CD8-positive, alpha-beta T cell (primary cell): ENCODE measurements at regions of chr1 and their contacts with region 1.

Region 1: DNA sequence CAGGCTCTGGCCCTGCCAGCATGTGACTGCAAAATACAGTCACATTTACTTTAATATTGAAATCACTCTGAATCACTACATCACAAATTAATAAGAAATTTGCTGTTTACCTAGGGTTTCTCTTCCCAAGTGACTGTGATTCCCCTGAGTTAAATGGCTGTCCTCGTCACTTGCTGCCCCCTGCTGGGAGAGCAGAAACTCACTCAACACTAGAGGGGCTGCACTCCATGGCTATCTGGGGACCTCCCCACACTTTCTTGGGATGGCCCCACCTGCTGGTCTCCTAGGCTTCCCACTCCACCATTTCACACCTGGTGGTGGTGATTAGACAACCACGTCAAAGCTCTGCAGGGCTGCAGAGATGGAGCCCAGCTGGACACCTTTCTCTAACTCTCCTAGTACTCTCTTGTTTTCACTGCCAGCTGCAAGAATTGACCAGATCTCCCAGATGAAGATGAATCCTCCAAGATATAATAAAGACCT is 63.4 kb downstream of the CD2 start:
- DNase-seq: peak; percentile 43 to 89 (median 76)
- ATAC-seq: peak; percentile 71
- H3K4me3 ChIP-seq: no peak overlapping the region
- H3K4me3 Mint-ChIP-seq: peak overlapping the region; percentile 60
- H3K27ac ChIP-seq: no peak overlapping the region
- H3K27ac Mint-ChIP-seq: peak overlapping the region; percentile 70
- H3K4me1 ChIP-seq: peaks cover 19% of the 10 kb centered on the region
- H3K4me1 Mint-ChIP-seq: peaks cover 31% of the 10 kb centered on the region
- H3K27me3 ChIP-seq: no peaks in the 10 kb centered on the region
- H3K27me3 Mint-ChIP-seq: no peaks in the 10 kb centered on the region
- CTCF ChIP-seq: peak; percentile 80

Region 2: DNA sequence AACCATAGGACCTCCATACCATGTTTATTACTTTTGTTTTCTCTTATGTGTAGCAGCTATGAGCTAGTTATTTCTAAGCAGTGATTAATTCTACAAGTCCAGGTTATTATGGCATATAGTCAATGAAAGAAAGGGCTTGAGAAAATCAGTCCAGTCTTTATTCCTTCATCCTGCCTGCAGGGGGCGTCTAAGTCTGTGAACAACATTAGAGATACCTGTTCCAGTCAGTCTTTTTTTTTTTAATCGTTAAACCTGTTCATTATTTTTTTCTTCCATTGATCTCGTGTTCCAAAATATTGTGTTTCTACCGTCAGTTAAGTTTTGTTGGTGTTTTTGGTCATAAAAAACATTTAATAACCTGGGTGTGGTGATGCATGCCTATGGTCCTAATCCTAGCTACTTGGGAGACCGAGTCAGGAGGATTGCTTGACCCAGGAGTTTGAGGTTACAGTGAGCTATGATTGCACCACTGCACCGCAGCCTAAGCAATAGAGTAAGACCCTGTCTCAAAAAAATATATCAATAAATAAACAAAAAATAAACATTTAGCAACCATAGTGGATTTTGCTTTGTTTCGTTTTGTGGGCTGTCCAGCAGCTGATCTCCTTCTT is 92.8 kb before region 1 on chr1:
- CTCF ChIA-PET with region 1: interaction called, 43 read pairs
- POLR2A ChIA-PET with region 1: no interaction called
- intact Hi-C with region 1: loop called in 1 of 2 experiments (anchors 1 kb)
- DNase-seq: peak; percentile 52 to 86 (median 81)
- ATAC-seq: peak; percentile 75
- H3K4me3 ChIP-seq: no peak overlapping the region
- H3K4me3 Mint-ChIP-seq: no peak overlapping the region
- H3K27ac ChIP-seq: no peak overlapping the region
- H3K27ac Mint-ChIP-seq: no peak overlapping the region
- H3K4me1 ChIP-seq: no peaks in the 10 kb centered on the region
- H3K4me1 Mint-ChIP-seq: peaks cover 15% of the 10 kb centered on the region
- H3K27me3 ChIP-seq: no peaks in the 10 kb centered on the region
- H3K27me3 Mint-ChIP-seq: no peaks in the 10 kb centered on the region
- CTCF ChIP-seq: peak; percentile 97

Region 3: DNA sequence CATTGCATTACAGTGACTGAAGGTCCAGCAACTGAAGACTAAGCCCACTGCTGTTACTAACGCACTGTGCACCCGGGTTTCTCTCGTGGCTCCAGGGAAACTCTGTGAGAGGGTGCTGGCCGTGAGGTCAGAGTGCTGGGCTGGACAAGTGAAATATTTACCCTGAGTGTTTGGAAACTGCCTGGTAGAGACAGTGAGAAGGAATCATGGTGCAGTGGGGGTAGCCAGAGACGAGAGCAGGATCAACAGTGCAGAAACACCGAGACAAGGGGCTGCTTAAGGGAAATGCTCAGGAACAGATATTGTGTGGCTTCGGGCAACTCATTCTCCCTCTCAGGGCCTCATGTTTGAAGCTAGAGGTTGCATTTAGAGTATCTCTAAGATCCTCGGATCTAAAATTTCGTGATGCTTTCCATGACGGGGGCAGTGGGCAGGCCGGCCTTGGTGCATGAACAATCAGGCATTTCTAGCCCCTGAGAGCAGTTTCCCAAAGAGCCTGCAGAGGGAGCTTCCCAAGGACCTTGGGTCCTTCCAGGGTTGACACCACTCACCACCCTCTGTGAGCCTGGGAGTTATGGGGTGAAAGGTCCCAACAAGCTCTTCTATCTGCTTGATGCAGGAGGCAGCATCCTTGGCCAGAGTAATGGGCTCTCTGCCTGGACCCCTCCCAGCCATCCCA is 53.7 kb before region 1 on chr1:
- CTCF ChIA-PET with region 1: interaction called, 126 read pairs
- POLR2A ChIA-PET with region 1: interaction called, 22 read pairs
- intact Hi-C with region 1: loop called (anchors 1 to 2 kb)
- DNase-seq: peak in 4 of 9 experiments; percentile 45 to 74 (median 58)
- ATAC-seq: peak; percentile 10
- H3K4me3 ChIP-seq: peak overlapping the region; percentile 18 to 22
- H3K4me3 Mint-ChIP-seq: peak overlapping the region; percentile 75
- H3K27ac ChIP-seq: peak overlapping the region; percentile 57 to 87
- H3K27ac Mint-ChIP-seq: peak overlapping the region; percentile 96
- H3K4me1 ChIP-seq: peaks cover 96% of the 10 kb centered on the region
- H3K4me1 Mint-ChIP-seq: peaks cover 96% of the 10 kb centered on the region
- H3K27me3 ChIP-seq: no peaks in the 10 kb centered on the region
- H3K27me3 Mint-ChIP-seq: no peaks in the 10 kb centered on the region
- CTCF ChIP-seq: peak; percentile 22

Region 4: DNA sequence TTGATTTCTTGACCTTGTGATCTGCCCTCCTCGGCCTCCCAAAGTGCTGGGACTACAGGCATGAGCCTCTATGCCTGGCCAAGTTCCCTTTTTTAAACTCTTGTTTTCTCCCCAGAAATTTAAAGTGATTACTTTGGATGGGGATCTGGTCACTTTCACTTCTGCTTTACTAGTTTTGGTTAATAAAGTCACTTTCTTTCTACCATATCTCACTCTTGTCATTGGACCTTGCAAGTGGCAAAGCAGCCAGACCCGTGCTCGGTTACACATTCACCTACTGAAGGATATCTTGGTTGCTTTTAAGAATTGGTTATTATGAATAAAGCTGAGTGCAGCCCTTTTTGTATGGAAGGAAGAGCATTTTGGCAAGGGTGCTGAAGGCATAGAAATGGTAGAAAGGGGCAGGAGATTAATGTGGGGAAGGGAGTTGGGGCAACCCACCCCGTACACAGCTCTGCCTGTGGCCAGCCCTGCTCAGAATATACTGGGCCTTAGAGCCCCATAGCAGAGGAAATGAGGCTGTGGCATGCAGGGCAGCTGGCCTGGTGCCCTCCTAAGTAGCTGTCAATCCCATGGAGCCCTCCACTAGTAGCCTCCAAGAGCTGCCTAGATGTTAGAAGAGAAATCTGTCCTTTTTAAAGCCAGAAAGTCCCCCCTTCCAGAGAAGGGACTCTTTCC is 22.7 kb before region 1 on chr1:
- CTCF ChIA-PET with region 1: interaction called, 4 read pairs
- POLR2A ChIA-PET with region 1: interaction called, 7 read pairs
- intact Hi-C with region 1: loop called in 1 of 2 experiments (anchors 2 kb)
- DNase-seq: no peak
- ATAC-seq: no peak
- H3K4me3 ChIP-seq: no peak overlapping the region
- H3K4me3 Mint-ChIP-seq: no peak overlapping the region
- H3K27ac ChIP-seq: peak overlapping the region in 1 of 2 experiments; percentile 22
- H3K27ac Mint-ChIP-seq: peak overlapping the region; percentile 50
- H3K4me1 ChIP-seq: peaks cover 26% of the 10 kb centered on the region
- H3K4me1 Mint-ChIP-seq: peaks cover 54% of the 10 kb centered on the region
- H3K27me3 ChIP-seq: no peaks in the 10 kb centered on the region
- H3K27me3 Mint-ChIP-seq: no peaks in the 10 kb centered on the region
- CTCF ChIP-seq: no peak

Region 5: DNA sequence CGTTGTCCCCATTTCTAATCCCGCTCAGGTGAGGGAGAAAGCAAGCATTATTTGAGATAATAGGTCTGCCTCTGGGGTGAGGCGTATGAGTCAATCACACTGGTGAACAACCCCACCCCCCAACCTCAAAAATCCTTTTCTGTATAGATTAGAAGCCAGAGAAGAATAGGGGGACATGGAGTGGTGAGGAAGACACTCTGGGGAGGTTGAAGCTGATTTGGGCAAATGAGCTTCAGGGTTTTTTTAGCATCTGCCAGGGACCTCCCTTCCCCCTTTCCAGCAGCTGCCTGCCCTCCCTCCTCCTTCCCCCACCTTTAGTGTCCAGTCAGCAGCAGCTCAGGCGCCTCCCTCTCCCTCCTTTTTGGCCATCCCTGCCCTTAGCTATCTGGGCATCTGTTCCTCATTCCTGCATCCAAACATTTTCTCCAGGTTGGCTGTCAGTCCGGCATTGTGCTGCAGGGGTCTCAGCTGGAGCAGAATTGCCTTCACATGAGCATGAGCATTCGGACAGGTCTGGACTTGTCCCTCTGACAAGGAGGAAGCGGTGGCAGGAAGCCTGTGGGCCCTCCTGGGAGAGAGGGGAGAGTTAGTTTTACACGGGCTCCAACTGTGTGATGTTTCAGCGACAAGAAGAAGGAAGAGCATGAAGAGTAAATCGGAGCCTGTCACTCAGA is 61.3 kb after region 1 on chr1:
- CTCF ChIA-PET with region 1: interaction called, 5 read pairs
- POLR2A ChIA-PET with region 1: interaction called, 3 read pairs
- intact Hi-C with region 1: loop called in 1 of 2 experiments (anchors 5 kb)
- DNase-seq: peak in 3 of 9 experiments; percentile 16 to 22 (median 16)
- ATAC-seq: no peak
- H3K4me3 ChIP-seq: peak overlapping the region in 1 of 2 experiments; percentile 24
- H3K4me3 Mint-ChIP-seq: no peak overlapping the region
- H3K27ac ChIP-seq: no peak overlapping the region
- H3K27ac Mint-ChIP-seq: no peak overlapping the region
- H3K4me1 ChIP-seq: peaks cover 35% of the 10 kb centered on the region
- H3K4me1 Mint-ChIP-seq: peaks cover 13% of the 10 kb centered on the region
- H3K27me3 ChIP-seq: no peaks in the 10 kb centered on the region
- H3K27me3 Mint-ChIP-seq: no peaks in the 10 kb centered on the region
- CTCF ChIP-seq: no peak